ENCODE measurements at regions of chr3 and their contacts with region 1.

Region 1: GRCh38 chr3:102136183-102136582 is 286.9 kb downstream of the NFKBIZ start:
- DNase-seq: peak; percentile 84
- ATAC-seq: peak; percentile 94
- H3K4me3 ChIP-seq: peak overlapping the region; percentile 39; the same call in 1 of the 2 replicates
- H3K27ac ChIP-seq: peak overlapping the region; percentile 94
- H3K4me1 ChIP-seq: peaks cover 18% of the 10 kb centered on the region
- H3K27me3 ChIP-seq: no peaks in the 10 kb centered on the region
- CTCF ChIP-seq: no peak

Region 2: DNA sequence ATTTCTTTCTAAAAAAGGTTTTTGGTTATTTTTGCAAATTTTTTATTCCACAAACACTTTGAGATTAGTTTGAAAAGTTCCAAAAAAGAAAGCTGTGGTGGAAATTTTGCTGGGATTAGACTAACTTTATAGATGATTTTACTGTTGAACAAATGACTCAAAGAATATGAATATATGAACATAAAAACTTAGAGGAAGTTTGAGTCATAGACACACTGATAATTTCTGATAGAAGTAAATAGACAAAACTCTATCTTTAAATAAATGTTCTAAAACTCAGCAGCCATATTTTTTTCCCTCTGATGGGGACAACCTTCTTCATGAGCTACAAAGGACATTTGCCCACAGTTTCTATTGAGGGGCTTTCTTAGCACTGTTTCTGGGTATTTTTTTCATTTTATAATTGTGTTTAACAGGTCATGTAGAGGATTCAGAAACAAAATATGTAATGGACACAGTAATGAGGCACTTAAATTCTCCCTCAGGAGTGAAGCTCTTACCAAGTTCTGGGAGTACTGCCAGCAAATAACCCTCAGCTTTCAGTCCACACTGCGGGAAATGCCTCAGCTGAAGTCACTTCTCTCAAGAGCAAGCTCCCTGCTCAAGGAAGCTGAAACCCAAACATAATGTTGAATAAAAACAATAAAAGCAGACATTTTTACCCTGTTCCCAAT is 129.2 kb before region 1 on chr3:
- CTCF ChIA-PET with region 1: no interaction called
- POLR2A ChIA-PET with region 1: no interaction called
- intact Hi-C with region 1: loop called (anchors 5 kb)
- DNase-seq: peak; percentile 95
- ATAC-seq: peak; percentile 96
- H3K4me3 ChIP-seq: peak overlapping the region; percentile 20; the same call in 1 of the 2 replicates
- H3K27ac ChIP-seq: peak overlapping the region; percentile 92
- H3K4me1 ChIP-seq: peaks cover 26% of the 10 kb centered on the region
- H3K27me3 ChIP-seq: no peaks in the 10 kb centered on the region
- CTCF ChIP-seq: no peak

Measured in PC-3 (cell line).